H1 (cell line): ENCODE measurements at regions of chr6 and their contacts with region 1.

Region 1: DNA sequence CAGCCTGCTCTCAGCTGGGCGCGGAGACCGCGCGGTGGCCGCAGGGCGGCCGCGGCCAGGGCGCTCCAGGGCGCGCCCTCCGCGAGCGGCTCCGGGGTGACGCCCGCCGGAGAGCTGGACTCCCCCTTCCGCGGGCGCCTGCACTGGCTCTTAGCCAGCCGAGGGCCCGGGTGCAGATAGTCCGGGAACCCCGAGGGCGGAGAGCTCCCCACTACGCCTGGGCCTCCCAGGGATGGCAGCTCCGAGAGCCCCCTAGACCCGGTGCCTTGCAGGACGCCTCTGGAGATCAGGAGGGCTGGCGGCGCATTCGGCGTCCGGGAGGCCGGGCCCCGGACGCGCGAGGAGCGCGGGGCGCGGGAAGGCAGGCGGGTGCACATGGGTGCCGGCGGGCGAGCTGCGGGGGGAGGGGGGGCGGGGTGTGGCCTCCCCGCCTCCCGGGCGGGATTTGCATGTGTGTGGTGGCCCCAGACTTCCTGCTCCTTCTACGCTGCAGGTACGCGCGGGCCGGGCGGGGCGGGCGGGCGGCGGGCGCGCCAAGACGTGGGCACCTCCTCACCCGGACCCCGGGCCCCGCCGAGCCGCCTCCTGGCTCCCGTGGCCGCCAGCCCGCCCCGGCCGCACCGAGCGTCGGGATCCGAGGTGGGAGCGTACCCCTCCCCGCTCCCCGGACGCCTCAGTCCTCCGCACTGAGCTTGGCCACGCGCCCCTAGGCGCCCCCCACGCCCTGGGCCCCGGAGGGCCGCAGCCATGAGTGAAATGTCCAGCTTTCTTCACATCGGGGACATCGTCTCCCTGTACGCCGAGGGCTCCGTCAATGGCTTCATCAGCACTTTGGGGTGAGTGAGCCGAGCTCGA is at the start of gene ITPR3:
- DNase-seq: peak in 1 of 2 experiments; percentile 79
- H3K4me3 ChIP-seq: peak within 1 kb of the TSS; percentile 70 to 85 (median 80)
- H3K27ac ChIP-seq: no peak within 1 kb of the TSS
- H3K4me1 ChIP-seq: peaks cover 6 to 15% (median 11%) of the 10 kb centered on the region in 4 experiments
- H3K27me3 ChIP-seq: peaks cover 0 to 3% (median 1%) of the 10 kb centered on the region in 4 experiments; a peak in 3 of 7 replicates
- CTCF ChIP-seq: no peak
- EP300 ChIP-seq: no peak
- POLR2A ChIP-seq: no peak
- RAD21 ChIP-seq: no peak
- total RNA-seq, gene ITPR3: 44.9 and 45.7 TPM in 2 replicates

Region 2: GRCh38 chr6:33490209-33490608 is 130.9 kb before region 1 on chr6:
- CTCF ChIA-PET with region 1: no interaction called
- POLR2A ChIA-PET with region 1: no interaction called
- DNase-seq: no peak
- H3K4me3 ChIP-seq: no peak overlapping the region
- H3K27ac ChIP-seq: no peak overlapping the region
- H3K4me1 ChIP-seq: peaks cover 0 to 3% (median 1%) of the 10 kb centered on the region in 4 experiments; a peak in 2 of 7 replicates
- H3K27me3 ChIP-seq: no peaks in the 10 kb centered on the region
- CTCF ChIP-seq: peak in 1 of 3 experiments; percentile 18; a peak in 1 of 4 replicates
- EP300 ChIP-seq: no peak
- POLR2A ChIP-seq: no peak
- RAD21 ChIP-seq: peak; percentile 2 to 16; a peak in 1 of 4 replicates

Region 3: GRCh38 chr6:33599413-33599911 is 21.6 kb before region 1 on chr6:
- CTCF ChIA-PET with region 1: interaction called, 14 read pairs
- POLR2A ChIA-PET with region 1: interaction called, 4 read pairs
- DNase-seq: no peak
- H3K4me3 ChIP-seq: no peak overlapping the region
- H3K27ac ChIP-seq: no peak overlapping the region
- H3K4me1 ChIP-seq: peaks cover 0 to 4% (median 0%) of the 10 kb centered on the region in 4 experiments; a peak in 2 of 7 replicates
- H3K27me3 ChIP-seq: no peaks in the 10 kb centered on the region
- CTCF ChIP-seq: no peak
- EP300 ChIP-seq: no peak
- POLR2A ChIP-seq: no peak
- RAD21 ChIP-seq: no peak

Region 4: GRCh38 chr6:33851959-33852358 is 230.9 kb after region 1 on chr6:
- CTCF ChIA-PET with region 1: no interaction called
- POLR2A ChIA-PET with region 1: no interaction called
- DNase-seq: peak; percentile 66 to 71
- H3K4me3 ChIP-seq: no peak overlapping the region
- H3K27ac ChIP-seq: no peak overlapping the region
- H3K4me1 ChIP-seq: peaks cover 0 to 5% (median 2%) of the 10 kb centered on the region in 4 experiments; a peak in 4 of 7 replicates
- H3K27me3 ChIP-seq: no peaks in the 10 kb centered on the region
- CTCF ChIP-seq: peak in 2 of 3 experiments; percentile 84 to 93; a peak in 3 of 4 replicates
- EP300 ChIP-seq: no peak
- POLR2A ChIP-seq: no peak
- RAD21 ChIP-seq: peak; percentile 88 to 96